ENCODE measurements at regions of chr2 and their contacts with region 1.

Region 1: DNA sequence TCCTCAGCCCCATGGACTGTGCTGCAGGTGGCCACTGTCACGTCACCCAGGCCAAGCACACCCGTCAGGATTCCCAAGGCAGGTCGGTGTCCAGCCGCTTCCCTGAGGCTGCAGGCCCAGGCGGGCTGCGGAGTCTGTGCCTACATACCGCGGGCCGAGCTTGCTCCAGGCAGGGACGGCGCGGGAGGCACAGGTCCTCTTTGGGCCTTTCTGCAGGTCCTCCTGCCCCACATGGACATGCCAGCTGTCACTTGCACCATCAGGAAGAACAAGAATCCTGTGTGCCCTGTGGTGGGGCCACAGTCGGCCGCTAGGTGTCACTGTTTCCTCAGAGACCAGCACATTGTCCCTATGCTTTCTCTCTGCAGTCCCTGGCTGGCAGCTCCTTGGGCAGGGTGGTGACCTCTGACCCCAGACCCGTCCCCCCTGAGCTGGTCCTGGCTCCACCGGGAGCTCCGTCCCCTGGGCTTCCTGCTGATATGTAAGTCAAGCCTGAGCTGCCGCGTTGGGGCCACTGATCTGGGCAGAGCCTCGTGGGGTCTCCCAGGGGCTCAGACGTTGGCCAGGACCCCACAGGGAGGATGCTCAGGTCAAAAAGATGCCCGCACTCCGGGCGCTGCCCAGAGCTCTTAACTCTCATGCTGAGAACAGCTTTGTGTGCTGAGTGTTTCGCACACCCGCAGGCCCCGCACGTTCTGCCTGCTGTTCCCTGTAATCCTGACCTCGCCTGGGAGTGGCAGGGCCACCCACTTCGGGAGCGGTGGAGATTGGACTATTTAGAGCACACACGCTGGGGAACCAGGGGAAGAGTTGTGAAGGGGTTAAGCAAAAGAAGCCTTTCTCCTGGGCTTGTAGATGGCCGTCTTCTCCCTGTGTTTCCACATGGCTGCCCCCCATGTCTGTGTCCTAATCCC is 17.3 kb upstream of the AGXT start:
- DNase-seq: peak; percentile 81
- H3K27ac ChIP-seq: no peak overlapping the region
- CTCF ChIP-seq: peak; percentile 93

Region 2: DNA sequence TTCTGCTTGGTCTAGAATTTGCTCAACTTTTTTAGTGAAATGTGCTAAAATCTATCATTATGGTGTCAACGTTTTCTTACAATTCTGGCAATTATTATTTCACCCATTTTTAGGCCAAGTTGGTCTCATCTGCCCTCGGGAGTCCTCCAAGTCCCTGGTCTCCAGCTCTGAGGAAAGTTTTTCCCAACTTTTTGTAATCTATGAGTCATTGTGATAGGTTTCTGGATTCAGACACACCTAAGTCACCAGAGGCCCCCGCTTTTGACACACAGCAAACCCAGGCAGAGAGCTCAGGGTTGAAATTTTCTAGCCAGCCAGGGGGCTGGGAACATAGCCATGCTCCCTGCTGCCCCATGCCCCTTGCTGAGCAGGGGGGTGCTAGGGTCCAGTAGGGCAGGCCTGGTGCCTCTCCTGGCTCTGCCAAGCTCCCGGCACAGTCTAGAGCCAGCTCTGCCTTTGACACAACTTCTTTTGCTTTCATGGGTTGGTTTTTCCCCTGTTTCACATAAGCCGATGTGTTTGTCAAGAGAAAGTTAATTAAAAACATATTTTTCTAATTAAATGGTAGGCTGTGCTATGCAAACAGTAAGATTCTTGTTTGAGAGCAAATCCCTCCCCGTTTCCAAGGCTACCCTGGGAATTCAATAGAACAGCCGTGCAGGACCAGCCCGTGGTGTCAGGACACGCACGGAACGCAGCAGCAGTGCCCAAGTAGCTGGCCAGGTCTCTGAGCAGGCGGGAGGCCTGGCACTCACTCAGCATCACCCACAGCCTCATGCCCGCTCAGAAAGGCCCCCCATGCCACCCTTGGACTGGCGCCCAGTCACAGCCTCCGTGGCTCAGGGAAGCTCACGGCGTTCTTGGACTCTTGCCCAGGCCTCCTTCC is 121.5 kb after region 1 on chr2:
- CTCF ChIA-PET with region 1: interaction called, 10 read pairs
- POLR2A ChIA-PET with region 1: no interaction called
- DNase-seq: peak; percentile 26
- H3K27ac ChIP-seq: peak overlapping the region; percentile 87
- CTCF ChIP-seq: no peak

Region 3: DNA sequence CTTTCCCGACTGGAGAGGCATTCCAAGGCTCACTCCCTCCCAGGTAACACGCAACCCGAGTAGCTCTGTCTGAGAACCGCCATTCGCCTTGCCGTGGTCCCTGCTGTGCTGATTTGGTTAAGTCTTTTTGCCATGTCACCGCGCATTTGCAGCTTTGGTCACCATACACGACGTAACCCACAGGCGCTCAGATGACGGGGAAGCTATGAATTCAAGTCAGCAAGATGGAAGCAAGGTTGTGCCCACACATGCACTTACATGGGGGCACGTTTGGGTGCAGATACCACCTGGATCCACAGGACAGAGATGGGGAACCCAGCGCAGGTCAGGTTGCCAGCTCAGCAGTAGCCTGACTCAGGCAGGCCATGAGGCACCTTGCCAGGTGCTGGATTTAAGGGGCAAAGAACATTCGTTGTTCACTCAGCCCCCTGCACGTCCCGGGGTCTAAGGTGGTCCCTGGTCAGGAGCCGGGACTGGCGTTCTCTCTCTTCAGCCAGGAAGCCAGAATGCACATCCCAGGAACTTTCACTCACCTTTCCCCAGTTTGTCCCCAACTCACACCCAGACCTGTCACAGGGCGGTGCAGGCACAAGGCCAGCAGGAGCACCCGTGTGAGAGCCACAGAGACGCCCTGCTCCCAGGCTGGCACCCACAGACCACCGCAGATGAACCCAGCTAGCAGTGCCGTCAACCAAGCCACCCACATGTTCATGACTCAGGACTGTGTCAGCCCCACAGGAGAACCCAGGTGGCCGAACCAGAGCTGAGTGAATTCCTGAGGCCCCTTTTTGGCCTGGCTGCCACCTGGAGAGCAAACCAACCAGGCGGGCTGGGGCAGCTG is 166.9 kb after region 1 on chr2:
- CTCF ChIA-PET with region 1: no interaction called
- POLR2A ChIA-PET with region 1: interaction called, 19 read pairs
- DNase-seq: no peak
- H3K27ac ChIP-seq: no peak overlapping the region
- CTCF ChIP-seq: no peak

Measured in RWPE1 (cell line).